Ovary (tissue), 10 donors: ENCODE measurements at regions of chr1 and their contacts with region 1.

Region 1: GRCh38 chr1:81270051-81270450 is 530.7 kb upstream of the ADGRL2 start:
- DNase-seq: no peak
- H3K4me3 ChIP-seq: no peak overlapping the region
- H3K27ac ChIP-seq: no peak overlapping the region
- H3K4me1 ChIP-seq: no peaks in the 10 kb centered on the region
- H3K27me3 ChIP-seq: no peaks in the 10 kb centered on the region
- CTCF ChIP-seq: no peak
- EP300 ChIP-seq: no peak
- POLR2A ChIP-seq: no peak

Region 2: DNA sequence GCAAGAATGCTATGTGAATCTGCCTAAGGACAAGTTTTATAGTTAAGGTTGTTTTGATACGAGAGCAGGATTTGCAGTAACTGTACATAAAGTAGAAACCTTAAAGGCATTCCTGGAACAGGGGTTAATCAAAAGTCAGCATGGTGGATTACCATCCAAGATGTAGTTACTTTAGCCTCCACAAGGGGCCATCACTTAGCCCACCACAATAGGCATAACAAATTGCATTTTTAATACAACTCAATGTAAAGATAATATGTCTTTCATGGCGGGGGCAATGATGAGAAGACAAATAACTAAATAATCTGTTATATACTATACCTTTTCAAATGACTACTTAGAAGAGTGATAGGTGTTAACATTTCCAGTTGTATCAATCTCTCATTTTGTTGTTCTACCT is 1652.3 kb before region 1 on chr1:
- intact Hi-C with region 1: loop called in 1 of 4 experiments (anchors 5 kb)
- DNase-seq: no peak
- H3K4me3 ChIP-seq: no peak overlapping the region
- H3K27ac ChIP-seq: no peak overlapping the region
- H3K4me1 ChIP-seq: no peaks in the 10 kb centered on the region
- H3K27me3 ChIP-seq: no peaks in the 10 kb centered on the region
- CTCF ChIP-seq: no peak
- EP300 ChIP-seq: no peak
- POLR2A ChIP-seq: no peak